Panc1 (cell line): ENCODE measurements at regions of chr3 and their contacts with region 1.

Region 1: GRCh38 chr3:184384856-184385422 is 5.1 kb downstream of the CHRD start:
- DNase-seq: no peak
- ATAC-seq: no peak
- H3K4me3 ChIP-seq: no peak overlapping the region
- H3K27ac ChIP-seq: no peak overlapping the region
- H3K4me1 ChIP-seq: no peaks in the 10 kb centered on the region
- H3K27me3 ChIP-seq: peaks cover 4% of the 10 kb centered on the region; the same call in 1 of the 2 replicates
- CTCF ChIP-seq: no peak

Region 2: GRCh38 chr3:184229394-184230080 is 155.4 kb before region 1 on chr3 and contains the start of gene VWA5B2:
- CTCF ChIA-PET with region 1: interaction called, 13 read pairs
- POLR2A ChIA-PET with region 1: no interaction called
- in situ Hi-C with region 1: no loop called
- intact Hi-C with region 1: no loop called
- DNase-seq: no peak
- ATAC-seq: peak; percentile 90
- H3K4me3 ChIP-seq: peak within 1 kb of the TSS; percentile 41 to 60
- H3K27ac ChIP-seq: no peak within 1 kb of the TSS
- H3K4me1 ChIP-seq: no peaks in the 10 kb centered on the region; the same call in 1 of the 2 replicates
- H3K27me3 ChIP-seq: peaks cover 14% of the 10 kb centered on the region; the same call in 1 of the 2 replicates
- CTCF ChIP-seq: no peak; the same call in 1 of the 2 replicates
- total RNA-seq, gene VWA5B2: 0.28 TPM

Region 3: DNA sequence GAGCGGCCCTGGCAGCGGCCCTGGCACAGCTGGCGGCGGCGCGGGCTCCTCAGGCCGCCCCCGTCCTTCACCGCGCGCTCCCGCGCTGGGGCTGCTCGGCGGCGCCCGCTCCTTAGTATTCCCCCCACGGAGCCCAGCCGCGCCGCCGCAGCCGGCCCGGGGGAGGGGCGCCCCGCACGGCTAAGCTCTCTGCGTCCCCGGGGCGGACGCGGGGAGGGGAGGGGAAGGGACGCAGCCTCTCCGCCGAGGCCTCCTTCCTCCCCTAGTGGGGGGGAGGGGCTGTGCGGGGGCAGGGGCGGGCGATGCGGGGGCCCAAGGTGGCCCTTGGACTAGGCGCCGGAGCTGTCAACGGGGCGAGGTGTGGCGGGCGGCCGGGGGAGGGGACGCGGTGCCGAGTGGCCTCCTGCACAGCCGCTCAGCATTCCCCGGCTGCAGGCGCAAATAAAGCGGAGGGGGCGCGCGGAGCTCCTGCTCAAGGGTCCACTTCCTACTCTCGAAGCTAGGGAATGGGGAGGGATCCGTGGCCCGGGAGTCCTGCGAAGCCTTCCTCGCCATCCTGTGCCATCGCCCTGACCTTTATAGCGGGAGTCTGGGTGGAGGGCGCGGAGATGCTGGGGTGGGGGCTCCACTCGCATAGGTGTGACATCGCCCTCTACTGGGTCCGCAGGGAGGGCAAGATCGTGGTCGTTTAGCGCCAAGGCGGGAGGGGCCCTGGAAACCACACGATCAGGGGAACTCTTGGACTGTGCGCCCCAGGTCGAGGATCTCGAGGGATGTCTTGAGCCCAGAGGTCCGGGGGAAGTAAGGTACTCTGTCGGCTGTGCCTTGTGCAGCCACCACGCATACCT is 198.9 kb after region 1 on chr3:
- CTCF ChIA-PET with region 1: no interaction called
- POLR2A ChIA-PET with region 1: interaction called, 10 read pairs
- in situ Hi-C with region 1: no loop called
- intact Hi-C with region 1: no loop called
- DNase-seq: no peak
- ATAC-seq: no peak
- H3K4me3 ChIP-seq: no peak overlapping the region
- H3K27ac ChIP-seq: no peak overlapping the region
- H3K4me1 ChIP-seq: no peaks in the 10 kb centered on the region
- H3K27me3 ChIP-seq: no peaks in the 10 kb centered on the region
- CTCF ChIP-seq: no peak

Region 4: DNA sequence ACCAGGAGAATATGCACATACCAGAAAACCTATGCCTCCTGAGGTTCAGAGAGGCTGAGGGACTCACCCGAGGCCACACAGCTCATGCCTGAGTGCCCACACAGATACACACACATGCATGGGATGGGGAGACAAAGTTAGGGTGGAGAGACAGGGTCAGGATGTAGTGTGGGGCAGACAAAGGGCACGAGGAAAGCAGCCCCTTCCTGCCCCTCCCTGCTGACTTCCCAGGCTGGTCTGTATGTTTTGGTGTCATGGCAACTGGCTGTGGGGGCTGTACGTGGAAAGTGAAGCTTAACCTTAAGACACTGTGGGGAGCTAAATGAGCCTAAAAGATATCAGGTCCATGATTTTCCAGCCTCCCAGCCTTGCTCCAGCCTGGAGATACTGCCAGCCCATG is 234.4 kb after region 1 on chr3:
- CTCF ChIA-PET with region 1: no interaction called
- POLR2A ChIA-PET with region 1: no interaction called
- in situ Hi-C with region 1: no loop called
- intact Hi-C with region 1: no loop called
- DNase-seq: no peak
- ATAC-seq: no peak
- H3K4me3 ChIP-seq: no peak overlapping the region
- H3K27ac ChIP-seq: no peak overlapping the region
- H3K4me1 ChIP-seq: no peaks in the 10 kb centered on the region
- H3K27me3 ChIP-seq: no peaks in the 10 kb centered on the region
- CTCF ChIP-seq: no peak

Region 5: GRCh38 chr3:184748219-184749135 is 363.5 kb after region 1 on chr3:
- CTCF ChIA-PET with region 1: no interaction called
- POLR2A ChIA-PET with region 1: no interaction called
- in situ Hi-C with region 1: no loop called
- intact Hi-C with region 1: no loop called
- DNase-seq: peak; percentile 8
- ATAC-seq: peak; percentile 92
- H3K4me3 ChIP-seq: no peak overlapping the region
- H3K27ac ChIP-seq: no peak overlapping the region
- H3K4me1 ChIP-seq: no peaks in the 10 kb centered on the region
- H3K27me3 ChIP-seq: peaks cover 12% of the 10 kb centered on the region
- CTCF ChIP-seq: no peak; the same call in 1 of the 2 replicates